Esophagus squamous epithelium (tissue), 5 donors: ENCODE measurements at regions of chr9 and their contacts with region 1.

Region 1: GRCh38 chr9:70419546-70420266 is 5.2 kb upstream of the KLF9 start:
- DNase-seq: peak; percentile 91
- H3K4me3 ChIP-seq: peak overlapping the region; percentile 38 to 72 (median 51)
- H3K27ac ChIP-seq: peak overlapping the region; percentile 96 to 100 (median 100)
- H3K4me1 ChIP-seq: peaks cover 24 to 78% (median 36%) of the 10 kb centered on the region in 3 donors
- H3K27me3 ChIP-seq: no peaks in the 10 kb centered on the region
- CTCF ChIP-seq: peak in 3 of 6 experiments; percentile 7 to 23 (median 17)
- POLR2A ChIP-seq: peak in 3 of 4 donors; percentile 48 to 93 (median 91)

Region 2: DNA sequence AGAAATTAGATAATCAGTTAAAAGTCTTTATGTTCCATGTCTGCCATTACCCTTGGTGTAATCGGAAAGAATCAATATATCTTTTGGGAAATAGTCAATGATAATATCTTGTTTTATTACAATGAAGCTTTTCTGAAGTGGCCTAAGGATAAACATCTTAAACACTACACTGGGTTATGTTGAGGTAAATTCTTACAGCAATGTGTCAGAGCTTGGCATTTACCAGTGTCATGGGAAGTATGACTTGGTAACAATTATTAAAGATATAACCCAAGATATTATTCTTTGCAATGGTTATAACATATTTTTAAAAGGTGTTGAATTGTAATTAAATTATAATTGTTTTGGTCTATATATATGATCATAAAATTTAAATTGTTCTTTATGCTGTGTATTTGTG is 514.4 kb before region 1 on chr9:
- intact Hi-C with region 1: no loop called
- DNase-seq: no peak
- H3K4me3 ChIP-seq: no peak overlapping the region
- H3K27ac ChIP-seq: no peak overlapping the region
- H3K4me1 ChIP-seq: no peaks in the 10 kb centered on the region
- H3K27me3 ChIP-seq: peaks cover 0 to 7% (median 0%) of the 10 kb centered on the region in 4 donors
- CTCF ChIP-seq: no peak
- POLR2A ChIP-seq: no peak

Region 3: GRCh38 chr9:70382709-70383605 is 36.7 kb before region 1 on chr9:
- intact Hi-C with region 1: no loop called
- DNase-seq: no peak
- H3K4me3 ChIP-seq: no peak overlapping the region
- H3K27ac ChIP-seq: no peak overlapping the region
- H3K4me1 ChIP-seq: peaks cover 0 to 20% (median 0%) of the 10 kb centered on the region in 3 donors
- H3K27me3 ChIP-seq: no peaks in the 10 kb centered on the region
- CTCF ChIP-seq: no peak
- POLR2A ChIP-seq: no peak

Region 4: GRCh38 chr9:70480405-70480980 is 60.8 kb after region 1 on chr9:
- intact Hi-C with region 1: loop called (anchors 2 kb)
- DNase-seq: no peak
- H3K4me3 ChIP-seq: peak overlapping the region in 3 of 4 donors; percentile 1 to 18 (median 18)
- H3K27ac ChIP-seq: peak overlapping the region; percentile 92 to 97 (median 96)
- H3K4me1 ChIP-seq: peaks cover 38 to 82% (median 64%) of the 10 kb centered on the region in 3 donors
- H3K27me3 ChIP-seq: no peaks in the 10 kb centered on the region
- CTCF ChIP-seq: no peak
- POLR2A ChIP-seq: peak in 2 of 4 donors; percentile 65 to 83